Heart left ventricle (tissue), 16 donors: ENCODE measurements at regions of chr21 and their contacts with region 1.

Region 1: DNA sequence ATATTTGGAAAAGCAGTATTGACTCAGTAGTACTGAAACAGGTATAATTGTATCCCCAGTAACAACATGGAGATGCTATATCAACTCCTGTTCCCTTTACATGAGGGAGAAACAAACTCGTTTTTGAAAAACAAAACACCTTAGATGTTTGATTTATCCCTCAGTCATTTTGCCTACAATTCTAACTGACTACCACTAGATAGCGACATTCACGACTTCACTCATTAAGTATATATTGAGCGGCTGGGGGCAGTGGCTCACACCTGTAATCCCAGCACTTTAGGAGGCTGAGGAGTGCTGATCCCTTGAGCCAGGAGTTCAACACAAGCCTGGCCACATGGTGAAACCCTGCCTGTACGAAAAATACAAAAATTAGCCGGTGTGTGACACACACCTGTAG is 83.3 kb downstream of the CYYR1 start:
- DNase-seq: no peak
- ATAC-seq: no peak
- H3K4me3 ChIP-seq: no peak overlapping the region
- H3K27ac ChIP-seq: no peak overlapping the region
- H3K4me1 ChIP-seq: peaks cover 0 to 4% (median 0%) of the 10 kb centered on the region in 12 donors
- H3K27me3 ChIP-seq: no peaks in the 10 kb centered on the region
- CTCF ChIP-seq: no peak
- POLR2A ChIP-seq: no peak

Region 2: GRCh38 chr21:26461500-26461899 is 28.3 kb before region 1 on chr21:
- intact Hi-C with region 1: no loop called
- DNase-seq: no peak
- ATAC-seq: no peak
- H3K4me3 ChIP-seq: no peak overlapping the region
- H3K27ac ChIP-seq: no peak overlapping the region
- H3K4me1 ChIP-seq: no peaks in the 10 kb centered on the region
- H3K27me3 ChIP-seq: no peaks in the 10 kb centered on the region
- CTCF ChIP-seq: no peak
- POLR2A ChIP-seq: no peak

Region 3: DNA sequence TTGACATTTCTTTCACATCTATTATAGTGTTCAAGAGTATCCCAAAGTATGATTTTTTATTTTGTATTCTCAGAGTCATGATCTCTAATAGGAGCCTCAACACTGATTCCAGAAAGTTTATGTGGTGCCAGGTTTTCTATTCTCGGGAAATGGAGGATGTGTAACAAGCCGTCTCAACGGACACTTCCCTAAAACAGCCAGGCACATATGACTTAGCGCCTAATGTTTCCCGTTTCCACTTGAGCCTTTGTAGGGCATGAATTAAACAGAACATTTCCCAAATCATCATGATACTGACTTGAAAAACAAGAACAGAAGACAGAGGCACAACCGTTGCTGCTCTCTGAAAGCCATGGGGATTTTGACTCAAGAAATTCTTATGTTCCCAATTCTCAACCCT is 75.3 kb after region 1 on chr21:
- intact Hi-C with region 1: loop called in 2 of 10 experiments (anchors 10 kb)
- DNase-seq: no peak
- ATAC-seq: peak in 2 of 4 donors; percentile 29 to 62
- H3K4me3 ChIP-seq: no peak overlapping the region
- H3K27ac ChIP-seq: peak overlapping the region; percentile 22 to 86 (median 62)
- H3K4me1 ChIP-seq: peaks cover 0 to 24% (median 7%) of the 10 kb centered on the region in 12 donors
- H3K27me3 ChIP-seq: no peaks in the 10 kb centered on the region
- CTCF ChIP-seq: no peak
- POLR2A ChIP-seq: no peak